CD4-positive, alpha-beta memory T cell (primary cell): ENCODE measurements at regions of chrX and their contacts with region 1.

Region 1: DNA sequence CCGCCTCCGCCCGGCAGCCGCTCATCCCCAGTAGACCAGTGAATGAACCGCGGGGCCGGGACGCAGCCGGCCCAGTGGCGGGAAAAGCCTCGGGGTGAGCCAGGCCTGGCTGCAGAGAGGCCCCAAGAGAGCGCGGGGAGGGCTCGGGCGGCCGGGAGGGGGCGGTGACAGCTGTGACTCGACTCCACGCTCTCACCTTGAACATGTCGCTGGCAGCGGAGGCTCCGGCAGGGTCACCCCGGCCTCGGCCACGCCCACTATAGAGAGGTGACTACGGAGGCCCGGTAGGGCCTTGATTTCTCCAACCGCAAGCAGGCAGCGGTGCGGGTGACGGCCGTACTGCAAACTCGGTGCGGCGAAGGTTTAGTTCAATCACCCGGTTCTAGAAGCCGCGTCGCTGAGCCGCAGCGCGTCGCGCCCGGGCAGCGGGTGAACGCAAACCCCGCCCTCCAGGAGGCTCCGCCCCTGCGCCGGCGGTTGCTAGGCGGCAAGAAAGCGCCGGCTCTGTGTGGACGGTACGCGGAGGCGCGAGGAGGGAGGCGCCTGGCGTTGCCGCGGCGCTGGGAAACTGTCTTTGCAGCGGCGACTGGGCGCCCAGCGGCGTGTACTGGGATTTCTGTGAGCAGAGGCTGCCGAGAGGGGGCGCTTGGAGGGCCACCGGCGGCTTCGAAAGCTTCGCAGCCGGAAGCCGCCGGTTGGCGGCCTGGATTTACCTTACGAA is at the starts of genes APOO and CXorf58:
- DNase-seq: peak; percentile 91 to 95 (median 92)
- H3K4me3 ChIP-seq: peak within 1 kb of the TSS in 1 of 2 donors; percentile 68
- H3K4me3 Mint-ChIP-seq: peak within 1 kb of the TSS; percentile 78 to 91 (median 84)
- H3K27ac ChIP-seq: peak within 1 kb of the TSS; percentile 78
- H3K27ac Mint-ChIP-seq: peak within 1 kb of the TSS; percentile 88 to 96 (median 91)
- H3K4me1 ChIP-seq: peaks cover 28% of the 10 kb centered on the region
- H3K4me1 Mint-ChIP-seq: peaks cover 7 to 22% (median 13%) of the 10 kb centered on the region in 4 donors
- H3K27me3 ChIP-seq: no peaks in the 10 kb centered on the region
- H3K27me3 Mint-ChIP-seq: no peaks in the 10 kb centered on the region
- total RNA-seq, gene APOO: 5.1 to 7.9 TPM
- total RNA-seq, gene CXorf58: not detected

Region 2: GRCh38 chrX:22748093-22748999 is 1159.3 kb before region 1 on chrX:
- CTCF ChIA-PET with region 1: no interaction called
- POLR2A ChIA-PET with region 1: no interaction called
- intact Hi-C with region 1: loop called (anchors 10 kb)
- DNase-seq: peak in 4 of 5 donors; percentile 17 to 41 (median 31)
- H3K4me3 ChIP-seq: no peak overlapping the region
- H3K4me3 Mint-ChIP-seq: no peak overlapping the region
- H3K27ac ChIP-seq: no peak overlapping the region
- H3K27ac Mint-ChIP-seq: no peak overlapping the region
- H3K4me1 ChIP-seq: no peaks in the 10 kb centered on the region
- H3K4me1 Mint-ChIP-seq: no peaks in the 10 kb centered on the region
- H3K27me3 ChIP-seq: no peaks in the 10 kb centered on the region
- H3K27me3 Mint-ChIP-seq: peaks cover 0 to 3% of the 10 kb centered on the region in 2 donors

Region 3: GRCh38 chrX:23667239-23668177 is 240.2 kb before region 1 on chrX and contains the start of gene PRDX4:
- CTCF ChIA-PET with region 1: interaction called, 10 read pairs
- POLR2A ChIA-PET with region 1: interaction called, 14 read pairs
- intact Hi-C with region 1: loop called (anchors 1 kb)
- DNase-seq: peak; percentile 60 to 75 (median 67)
- H3K4me3 ChIP-seq: peak within 1 kb of the TSS in 1 of 2 donors; percentile 52
- H3K4me3 Mint-ChIP-seq: peak within 1 kb of the TSS; percentile 86 to 94 (median 88)
- H3K27ac ChIP-seq: peak within 1 kb of the TSS; percentile 85
- H3K27ac Mint-ChIP-seq: peak within 1 kb of the TSS; percentile 85 to 94 (median 91)
- H3K4me1 ChIP-seq: peaks cover 17% of the 10 kb centered on the region
- H3K4me1 Mint-ChIP-seq: peaks cover 14 to 29% (median 17%) of the 10 kb centered on the region in 4 donors
- H3K27me3 ChIP-seq: no peaks in the 10 kb centered on the region
- H3K27me3 Mint-ChIP-seq: no peaks in the 10 kb centered on the region
- total RNA-seq, gene PRDX4: 13.1 to 13.4 TPM

Region 4: DNA sequence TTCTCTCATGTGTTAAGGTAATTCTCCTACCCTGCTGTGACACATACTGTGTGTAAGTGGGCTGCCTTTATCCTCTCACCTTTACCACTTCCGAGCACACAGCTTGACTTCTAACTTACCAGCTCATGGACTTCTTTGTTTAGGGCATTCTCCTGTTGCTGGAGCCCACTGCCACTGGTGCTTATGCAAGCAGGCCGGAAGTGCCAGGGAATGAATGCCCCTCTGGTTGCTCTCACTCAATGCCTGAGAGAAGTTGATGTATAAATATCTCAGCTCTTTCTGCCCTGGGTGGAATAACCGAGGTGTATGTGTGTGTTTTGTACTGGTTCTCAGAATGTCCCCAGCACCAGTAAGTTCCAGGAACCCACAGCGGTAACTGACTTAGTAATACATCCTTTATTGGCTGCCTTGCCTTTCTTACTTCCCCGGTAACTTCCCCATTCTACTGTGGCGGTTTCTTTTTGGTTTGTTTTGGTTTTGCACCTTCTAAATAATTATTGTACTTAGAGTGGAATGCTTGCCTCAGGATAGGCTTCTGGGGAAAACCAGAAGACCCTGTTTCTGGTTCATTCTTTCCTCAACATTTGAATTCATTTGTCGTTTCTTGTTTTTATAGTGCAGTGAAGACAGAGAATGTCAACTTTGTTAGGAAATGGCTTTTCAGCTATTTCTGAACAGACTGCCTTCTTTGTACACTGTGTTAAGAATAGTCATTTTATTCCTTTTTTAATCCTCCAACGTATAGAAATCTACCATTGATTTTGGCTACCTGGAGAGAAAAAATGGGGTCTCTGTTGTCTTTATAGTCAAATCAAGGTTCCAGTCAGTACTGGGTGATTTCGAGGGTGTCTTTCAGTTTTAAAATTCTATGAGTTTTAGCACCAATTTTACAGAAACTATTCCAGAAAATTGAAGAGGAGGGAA is 45.6 kb after region 1 on chrX:
- CTCF ChIA-PET with region 1: interaction called, 9 read pairs
- POLR2A ChIA-PET with region 1: interaction called, 17 read pairs
- intact Hi-C with region 1: loop called (anchors 1 kb)
- DNase-seq: peak; percentile 42 to 59 (median 52)
- H3K4me3 ChIP-seq: peak overlapping the region in 1 of 2 donors; percentile 50
- H3K4me3 Mint-ChIP-seq: peak overlapping the region; percentile 72 to 88 (median 85)
- H3K27ac ChIP-seq: peak overlapping the region; percentile 64
- H3K27ac Mint-ChIP-seq: peak overlapping the region; percentile 61 to 93 (median 88)
- H3K4me1 ChIP-seq: peaks cover 20% of the 10 kb centered on the region
- H3K4me1 Mint-ChIP-seq: peaks cover 3 to 34% (median 9%) of the 10 kb centered on the region in 4 donors
- H3K27me3 ChIP-seq: no peaks in the 10 kb centered on the region
- H3K27me3 Mint-ChIP-seq: no peaks in the 10 kb centered on the region

Region 5: GRCh38 chrX:24024819-24025740 is 117.4 kb after region 1 on chrX:
- CTCF ChIA-PET with region 1: interaction called, 7 read pairs
- POLR2A ChIA-PET with region 1: interaction called, 37 read pairs
- intact Hi-C with region 1: loop called (anchors 1 kb)
- DNase-seq: peak; percentile 77 to 82 (median 80)
- H3K4me3 ChIP-seq: peak overlapping the region; percentile 61 to 62
- H3K4me3 Mint-ChIP-seq: peak overlapping the region; percentile 62 to 94 (median 88)
- H3K27ac ChIP-seq: peak overlapping the region; percentile 75
- H3K27ac Mint-ChIP-seq: peak overlapping the region in 5 of 7 donors; percentile 59 to 92 (median 75)
- H3K4me1 ChIP-seq: peaks cover 29% of the 10 kb centered on the region
- H3K4me1 Mint-ChIP-seq: peaks cover 14 to 29% (median 22%) of the 10 kb centered on the region in 4 donors
- H3K27me3 ChIP-seq: no peaks in the 10 kb centered on the region
- H3K27me3 Mint-ChIP-seq: no peaks in the 10 kb centered on the region

Region 6: DNA sequence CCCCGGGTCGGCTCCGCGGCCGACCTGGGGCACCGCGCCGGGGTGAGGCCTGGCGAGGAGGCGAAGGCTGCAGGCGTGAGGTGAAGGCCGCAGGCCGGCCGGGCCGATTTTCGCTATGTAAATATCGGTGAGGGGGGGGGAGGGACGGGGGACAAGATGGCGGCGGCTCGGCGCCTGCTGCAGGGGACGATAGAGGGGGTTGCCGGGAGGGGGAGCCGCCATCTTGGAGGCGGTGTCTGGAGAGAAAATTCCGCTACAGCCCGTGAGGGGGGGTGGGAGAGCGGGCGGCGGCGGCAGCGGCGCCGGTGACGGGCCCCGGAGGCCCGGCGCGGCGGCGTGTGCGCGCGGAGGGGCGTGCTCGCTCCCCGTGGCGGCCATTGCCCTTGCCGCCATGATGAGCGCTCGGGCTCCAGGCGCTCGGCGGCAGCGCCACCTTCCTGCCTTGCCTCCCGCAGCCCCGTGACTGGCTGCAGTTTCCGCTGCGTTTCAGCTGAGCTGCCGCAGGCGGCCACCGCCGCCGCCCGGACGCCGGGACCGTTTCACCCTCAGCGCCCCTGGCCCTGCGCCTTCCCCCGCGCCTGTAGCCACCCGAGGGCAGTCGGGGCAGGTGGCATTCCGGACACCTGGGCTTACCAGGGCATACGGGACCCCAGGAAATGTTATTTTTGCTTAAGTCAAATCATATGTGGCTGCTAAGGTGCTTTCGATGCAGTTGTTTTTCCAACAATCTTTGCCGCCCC is 242.6 kb after region 1 on chrX:
- CTCF ChIA-PET with region 1: no interaction called
- POLR2A ChIA-PET with region 1: interaction called, 3 read pairs
- intact Hi-C with region 1: loop called (anchors 1 kb)
- DNase-seq: peak; percentile 89 to 95 (median 93)
- H3K4me3 ChIP-seq: peak overlapping the region; percentile 64 to 65
- H3K4me3 Mint-ChIP-seq: peak overlapping the region; percentile 88 to 95 (median 92)
- H3K27ac ChIP-seq: peak overlapping the region; percentile 83
- H3K27ac Mint-ChIP-seq: peak overlapping the region; percentile 91 to 96 (median 94)
- H3K4me1 ChIP-seq: peaks cover 78% of the 10 kb centered on the region
- H3K4me1 Mint-ChIP-seq: peaks cover 39 to 77% (median 61%) of the 10 kb centered on the region in 4 donors
- H3K27me3 ChIP-seq: no peaks in the 10 kb centered on the region
- H3K27me3 Mint-ChIP-seq: no peaks in the 10 kb centered on the region

Region 7: GRCh38 chrX:24241822-24242648 is 334.4 kb after region 1 on chrX:
- CTCF ChIA-PET with region 1: no interaction called
- POLR2A ChIA-PET with region 1: interaction called, 4 read pairs
- intact Hi-C with region 1: loop called (anchors 1 kb)
- DNase-seq: peak in 4 of 5 donors; percentile 24 to 32 (median 30)
- H3K4me3 ChIP-seq: no peak overlapping the region
- H3K4me3 Mint-ChIP-seq: no peak overlapping the region
- H3K27ac ChIP-seq: no peak overlapping the region
- H3K27ac Mint-ChIP-seq: peak overlapping the region in 1 of 7 donors; percentile 19
- H3K4me1 ChIP-seq: no peaks in the 10 kb centered on the region
- H3K4me1 Mint-ChIP-seq: no peaks in the 10 kb centered on the region
- H3K27me3 ChIP-seq: no peaks in the 10 kb centered on the region
- H3K27me3 Mint-ChIP-seq: no peaks in the 10 kb centered on the region